Heart right ventricle (tissue), 16 donors: ENCODE measurements at regions of chr1 and their contacts with region 1.

Region 1: GRCh38 chr1:106843518-106843917 is 213.0 kb upstream of the PRMT6 start:
- DNase-seq: no peak
- ATAC-seq: no peak
- H3K4me3 ChIP-seq: no peak overlapping the region
- H3K27ac ChIP-seq: no peak overlapping the region
- H3K4me1 ChIP-seq: no peaks in the 10 kb centered on the region
- H3K27me3 ChIP-seq: no peaks in the 10 kb centered on the region
- CTCF ChIP-seq: no peak

Region 2: DNA sequence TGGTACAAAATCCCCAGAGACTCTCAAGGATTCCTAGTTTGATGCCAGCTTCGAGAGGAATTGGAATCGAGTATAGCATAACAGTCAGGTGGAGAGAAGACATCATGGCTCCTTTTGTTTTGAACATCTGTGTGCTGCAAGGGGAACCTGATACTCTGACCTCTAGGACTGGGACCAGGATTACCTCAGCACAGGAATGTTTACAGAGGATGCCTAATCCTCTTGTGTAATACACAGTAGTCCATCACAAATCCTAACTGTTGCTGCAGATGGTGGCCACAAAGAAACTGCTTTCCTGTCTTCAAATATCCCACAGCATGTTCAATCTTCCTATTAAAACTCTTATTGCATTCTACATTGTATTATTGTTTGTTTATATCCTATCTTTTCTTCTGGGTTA is 101.2 kb after region 1 on chr1:
- intact Hi-C with region 1: loop called in 1 of 10 experiments (anchors 5 kb)
- DNase-seq: no peak
- ATAC-seq: no peak
- H3K4me3 ChIP-seq: no peak overlapping the region
- H3K27ac ChIP-seq: no peak overlapping the region
- H3K4me1 ChIP-seq: no peaks in the 10 kb centered on the region
- H3K27me3 ChIP-seq: no peaks in the 10 kb centered on the region
- CTCF ChIP-seq: no peak